ENCODE measurements at regions of chr6 and their contacts with region 1.

Region 1: GRCh38 chr6:129683601-129684322 is 26.2 kb downstream of the ARHGAP18 start:
- DNase-seq: peak; percentile 76
- ATAC-seq: peak; percentile 91
- H3K4me3 Mint-ChIP-seq: peak overlapping the region; percentile 52
- H3K27ac Mint-ChIP-seq: peak overlapping the region; percentile 93
- H3K4me1 Mint-ChIP-seq: peaks cover 59% of the 10 kb centered on the region
- H3K27me3 Mint-ChIP-seq: no peaks in the 10 kb centered on the region

Region 2: GRCh38 chr6:129662406-129662766 is 21.4 kb before region 1 on chr6:
- CTCF ChIA-PET with region 1: no interaction called
- POLR2A ChIA-PET with region 1: no interaction called
- DNase-seq: no peak
- ATAC-seq: no peak
- H3K4me3 Mint-ChIP-seq: no peak overlapping the region
- H3K27ac Mint-ChIP-seq: no peak overlapping the region
- H3K4me1 Mint-ChIP-seq: peaks cover 23% of the 10 kb centered on the region
- H3K27me3 Mint-ChIP-seq: no peaks in the 10 kb centered on the region

Region 3: DNA sequence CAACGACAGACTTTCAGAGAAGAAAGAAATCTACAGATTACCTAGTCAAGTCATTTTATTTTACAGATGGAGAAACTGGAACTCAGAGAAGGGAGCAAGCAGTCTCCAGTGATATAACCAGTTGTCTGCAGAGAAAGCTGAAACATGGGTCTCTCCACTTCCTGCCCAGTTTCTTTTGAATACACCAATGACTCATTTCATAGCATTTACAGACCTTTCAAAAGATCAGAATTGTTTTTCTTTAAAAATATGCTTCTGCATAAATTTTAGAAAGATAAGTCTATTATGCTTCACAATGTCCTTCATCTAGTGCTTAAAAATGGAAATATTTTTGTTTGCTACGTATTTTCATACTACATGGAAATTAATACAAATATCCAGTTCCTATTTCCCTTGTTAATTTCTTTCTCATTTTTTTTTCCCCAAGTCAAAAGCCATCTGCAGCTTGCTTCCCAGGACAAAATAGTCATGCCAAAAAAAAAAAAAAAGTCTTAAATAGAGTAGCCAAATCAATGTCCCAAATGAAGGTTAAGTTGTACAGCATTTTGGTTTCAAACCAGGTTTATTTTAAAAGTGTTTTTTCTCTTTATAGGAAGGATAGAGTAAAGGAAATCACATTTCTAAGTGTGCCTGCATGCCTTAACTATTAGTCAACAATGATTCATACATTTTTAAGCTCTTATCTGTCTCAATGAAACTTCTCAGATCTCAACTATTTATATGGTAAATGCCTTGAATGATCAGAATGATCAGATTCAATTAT is 10.7 kb before region 1 on chr6:
- CTCF ChIA-PET with region 1: interaction called, 40 read pairs
- POLR2A ChIA-PET with region 1: interaction called, 9 read pairs
- DNase-seq: peak; percentile 53
- ATAC-seq: peak; percentile 71
- H3K4me3 Mint-ChIP-seq: peak overlapping the region; percentile 68
- H3K27ac Mint-ChIP-seq: peak overlapping the region; percentile 97
- H3K4me1 Mint-ChIP-seq: peaks cover 47% of the 10 kb centered on the region
- H3K27me3 Mint-ChIP-seq: no peaks in the 10 kb centered on the region